ENCODE measurements at regions of chr19 and their contacts with region 1.

Region 1: DNA sequence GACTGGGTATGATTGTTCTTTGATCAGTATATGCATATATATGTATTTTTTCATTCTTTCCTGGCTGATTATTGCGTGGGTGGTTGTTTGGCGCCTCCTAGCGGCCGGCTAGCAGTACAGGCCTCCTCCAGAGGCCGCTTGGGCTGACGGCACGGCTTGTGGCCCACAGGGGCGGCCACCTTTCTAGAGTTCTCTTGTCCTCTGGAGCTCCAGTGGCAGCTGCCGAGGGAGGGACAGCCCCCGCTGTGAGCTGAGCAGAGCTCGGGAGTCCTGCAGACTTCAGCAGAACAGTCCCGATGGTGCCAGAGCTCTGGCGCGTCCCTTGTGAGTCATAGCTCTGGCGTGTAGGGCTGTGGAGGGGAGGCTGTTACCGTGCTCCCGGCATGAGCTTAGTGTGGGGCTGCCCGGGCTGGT is 22.5 kb upstream of the ZNF429 start:
- DNase-seq: peak; percentile 81
- H3K4me3 ChIP-seq: peak overlapping the region in 1 of 2 experiments; percentile 33; a peak in 1 of 4 replicates
- H3K27ac ChIP-seq: no peak overlapping the region
- H3K4me1 ChIP-seq: no peaks in the 10 kb centered on the region
- H3K27me3 ChIP-seq: no peaks in the 10 kb centered on the region
- CTCF ChIP-seq: peak; percentile 52
- EP300 ChIP-seq: no peak
- RAD21 ChIP-seq: peak; percentile 76

Region 2: GRCh38 chr19:21492947-21493906 is 10.4 kb after region 1 on chr19:
- CTCF ChIA-PET with region 1: interaction called, 19 read pairs
- POLR2A ChIA-PET with region 1: no interaction called
- DNase-seq: no peak
- H3K4me3 ChIP-seq: no peak overlapping the region
- H3K27ac ChIP-seq: no peak overlapping the region
- H3K4me1 ChIP-seq: no peaks in the 10 kb centered on the region
- H3K27me3 ChIP-seq: no peaks in the 10 kb centered on the region
- CTCF ChIP-seq: no peak
- EP300 ChIP-seq: no peak
- RAD21 ChIP-seq: no peak

Region 3: DNA sequence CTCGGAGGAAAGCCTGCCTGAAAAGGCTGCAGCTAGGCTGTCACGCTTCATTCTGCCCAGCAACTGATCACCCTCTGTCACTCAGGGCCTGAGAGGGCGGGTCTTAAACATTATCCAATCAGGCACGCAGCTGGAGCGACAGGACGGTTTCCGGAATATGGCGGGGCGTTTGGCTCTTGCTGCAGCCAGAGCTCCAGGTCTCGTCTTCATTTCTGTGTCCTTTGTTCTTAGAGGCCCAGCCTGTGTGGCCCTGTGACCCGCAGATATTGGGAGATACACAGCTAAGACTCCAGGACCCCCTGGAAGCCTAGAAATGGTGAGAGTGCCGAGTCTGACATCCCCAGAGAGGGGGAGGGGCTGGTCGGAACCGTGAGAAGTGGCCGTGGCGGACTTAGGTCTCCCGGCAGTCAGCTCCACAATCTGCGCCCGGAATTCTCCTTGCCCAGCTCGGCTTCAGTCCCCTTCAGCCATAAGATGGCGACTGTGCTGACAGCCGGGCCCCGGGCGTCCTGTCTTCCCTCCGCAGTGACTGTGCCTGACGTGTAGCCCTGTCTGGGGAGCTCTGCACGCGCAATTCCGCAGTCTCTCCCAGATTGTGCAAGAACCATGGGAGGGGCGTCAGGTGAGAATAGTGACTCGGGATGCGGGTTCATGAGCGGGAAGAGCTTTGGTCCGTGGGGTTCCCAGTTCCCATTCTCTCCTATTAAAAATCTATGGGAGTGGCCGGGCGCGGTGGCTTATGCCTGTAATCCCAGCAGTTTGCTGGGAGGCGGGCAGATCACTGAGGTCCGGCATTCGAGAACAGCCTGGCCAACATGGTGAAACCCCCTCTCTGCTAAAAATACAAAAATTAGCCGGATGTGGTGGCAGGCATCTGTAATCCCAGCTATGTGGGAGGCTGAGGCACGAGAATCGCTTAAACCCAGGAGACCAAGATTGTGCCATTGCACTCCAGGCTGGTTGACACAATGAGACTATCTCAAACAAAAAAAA is 22.9 kb after region 1 on chr19 and contains the start of gene ZNF429:
- CTCF ChIA-PET with region 1: interaction called, 17 read pairs
- POLR2A ChIA-PET with region 1: interaction called, 5 read pairs
- DNase-seq: peak; percentile 90
- H3K4me3 ChIP-seq: peak within 1 kb of the TSS; percentile 71 to 86
- H3K27ac ChIP-seq: peak within 1 kb of the TSS; percentile 78 to 97
- H3K4me1 ChIP-seq: no peaks in the 10 kb centered on the region; a peak in 2 of 4 replicates
- H3K27me3 ChIP-seq: no peaks in the 10 kb centered on the region
- CTCF ChIP-seq: peak; percentile 11; the same call in 1 of the 2 replicates
- EP300 ChIP-seq: peak in 1 of 2 experiments; percentile 79; a peak in 2 of 4 replicates
- RAD21 ChIP-seq: peak; percentile 2; the same call in 1 of the 2 replicates
- polyA plus RNA-seq, gene ZNF429: 5.6 and 8.3 TPM in 2 replicates

Region 4: DNA sequence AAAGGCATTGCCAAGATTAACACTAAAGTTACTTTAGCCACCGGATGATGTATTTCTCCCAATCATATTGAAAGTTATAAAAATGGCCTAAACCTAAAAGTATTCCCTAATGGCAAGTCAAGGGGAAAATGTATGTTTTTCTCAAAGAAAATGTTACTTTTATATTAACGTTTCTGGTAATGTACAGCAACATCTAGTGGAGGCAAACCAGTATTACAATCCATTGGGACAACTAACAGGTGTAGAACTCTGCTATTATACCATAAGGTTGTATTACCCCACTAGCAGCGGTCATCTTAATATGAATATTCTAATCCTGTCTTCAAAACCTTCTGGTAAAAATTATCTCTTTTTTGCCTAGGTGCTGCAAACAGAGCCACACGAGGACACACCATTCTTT is 215.3 kb after region 1 on chr19:
- CTCF ChIA-PET with region 1: interaction called, 38 read pairs
- POLR2A ChIA-PET with region 1: no interaction called
- DNase-seq: peak; percentile 47
- H3K4me3 ChIP-seq: no peak overlapping the region
- H3K27ac ChIP-seq: no peak overlapping the region
- H3K4me1 ChIP-seq: peaks cover 0 to 7% of the 10 kb centered on the region in 2 experiments; a peak in 1 of 4 replicates
- H3K27me3 ChIP-seq: no peaks in the 10 kb centered on the region
- CTCF ChIP-seq: peak; percentile 52
- EP300 ChIP-seq: no peak
- RAD21 ChIP-seq: peak; percentile 81